BJ (cell line): ENCODE measurements at regions of chr17 and their contacts with region 1.

Region 1: GRCh38 chr17:36614933-36615332 is 13.6 kb downstream of the MRM1 start:
- DNase-seq: no peak
- H3K4me3 ChIP-seq: no peak overlapping the region
- H3K27me3 ChIP-seq: 0 out of 2 replicates have a peak, but pooled peaks cover 2% of the 10 kb centered on the region
- CTCF ChIP-seq: no peak

Region 2: GRCh38 chr17:36566081-36566480 is 48.9 kb before region 1 on chr17:
- CTCF ChIA-PET with region 1: no interaction called
- POLR2A ChIA-PET with region 1: no interaction called
- DNase-seq: no peak
- H3K4me3 ChIP-seq: no peak overlapping the region
- H3K27me3 ChIP-seq: no peaks in the 10 kb centered on the region
- CTCF ChIP-seq: no peak

Region 3: GRCh38 chr17:36576793-36577192 is 38.1 kb before region 1 on chr17:
- CTCF ChIA-PET with region 1: no interaction called
- POLR2A ChIA-PET with region 1: no interaction called
- DNase-seq: no peak
- H3K4me3 ChIP-seq: no peak overlapping the region
- H3K27me3 ChIP-seq: no peaks in the 10 kb centered on the region
- CTCF ChIP-seq: no peak

Region 4: DNA sequence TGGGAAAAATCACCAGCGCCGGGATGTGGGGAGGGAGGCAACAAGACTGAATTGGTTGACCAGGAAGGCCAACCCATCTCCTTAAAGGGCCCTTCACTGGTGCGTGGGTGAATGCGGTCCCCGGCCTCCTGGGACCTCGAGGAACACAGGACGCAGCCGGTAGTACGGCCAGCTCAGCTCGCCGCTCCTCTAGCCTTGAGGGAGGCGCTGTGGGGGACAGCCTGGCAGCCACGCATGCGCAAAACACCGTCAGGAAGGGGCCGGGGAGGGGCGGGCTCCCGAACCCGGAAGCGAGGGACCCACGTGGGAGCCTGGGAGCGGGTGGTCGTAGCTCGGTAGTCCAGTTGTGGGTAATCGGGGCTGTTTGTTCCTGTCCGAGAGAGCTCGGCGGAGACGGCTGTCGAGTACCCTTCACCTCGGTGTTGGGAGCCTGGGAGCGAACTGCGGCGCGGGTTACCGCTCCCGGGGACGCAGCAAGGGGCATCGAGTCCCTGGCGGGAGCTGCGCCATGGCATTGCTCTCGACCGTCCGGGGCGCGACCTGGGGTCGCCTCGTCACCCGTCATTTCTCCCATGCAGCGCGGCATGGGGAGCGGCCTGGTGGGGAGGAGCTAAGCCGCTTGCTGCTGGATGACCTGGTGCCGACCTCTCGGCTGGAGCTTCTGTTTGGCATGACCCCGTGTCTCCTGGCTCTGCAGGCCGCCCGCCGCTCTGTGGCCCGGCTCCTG is 13.5 kb before region 1 on chr17 and contains the start of gene MRM1:
- CTCF ChIA-PET with region 1: interaction called, 48 read pairs
- POLR2A ChIA-PET with region 1: interaction called, 3 read pairs
- DNase-seq: peak; percentile 72
- H3K4me3 ChIP-seq: peak within 1 kb of the TSS; percentile 92
- H3K27me3 ChIP-seq: no peaks in the 10 kb centered on the region
- CTCF ChIP-seq: peak; percentile 30
- polyA plus RNA-seq, gene MRM1: 3.0 and 3.9 TPM in 2 replicates

Region 5: GRCh38 chr17:36674278-36674650 is 59.3 kb after region 1 on chr17:
- CTCF ChIA-PET with region 1: no interaction called
- POLR2A ChIA-PET with region 1: no interaction called
- DNase-seq: no peak
- H3K4me3 ChIP-seq: no peak overlapping the region
- H3K27me3 ChIP-seq: peaks cover 5% of the 10 kb centered on the region
- CTCF ChIP-seq: no peak

Region 6: DNA sequence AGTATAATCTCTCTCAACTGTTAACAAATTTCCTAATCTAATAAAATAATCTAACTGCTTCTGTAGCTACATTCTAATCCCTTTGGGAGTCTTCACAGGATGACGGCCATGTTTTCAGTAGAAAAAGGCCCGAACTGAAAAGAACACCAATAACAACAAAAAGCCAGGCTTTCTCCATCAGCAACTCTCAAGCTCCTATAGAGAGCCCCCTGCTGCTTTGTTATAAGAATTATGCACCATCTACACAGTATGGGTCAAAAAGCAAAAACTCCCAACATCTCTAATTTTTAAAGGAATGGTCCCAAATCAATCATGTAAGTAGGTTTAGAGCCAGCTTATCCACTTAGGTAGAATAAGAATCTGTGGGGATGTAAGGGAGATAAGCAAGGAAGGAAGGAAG is 597.2 kb after region 1 on chr17:
- CTCF ChIA-PET with region 1: no interaction called
- POLR2A ChIA-PET with region 1: interaction called, 10 read pairs
- DNase-seq: no peak
- H3K4me3 ChIP-seq: no peak overlapping the region
- H3K27me3 ChIP-seq: no peaks in the 10 kb centered on the region
- CTCF ChIP-seq: peak; percentile 39